A673 (cell line): ENCODE measurements at regions of chr18 and their contacts with region 1.

Region 1: GRCh38 chr18:23131693-23132319 is 3.5 kb upstream of the CABLES1 start:
- DNase-seq: peak; percentile 84
- H3K4me3 ChIP-seq: no peak overlapping the region
- H3K27ac ChIP-seq: no peak overlapping the region
- H3K4me1 ChIP-seq: peaks cover 12% of the 10 kb centered on the region
- H3K27me3 ChIP-seq: no peaks in the 10 kb centered on the region
- CTCF ChIP-seq: peak; percentile 81

Region 2: DNA sequence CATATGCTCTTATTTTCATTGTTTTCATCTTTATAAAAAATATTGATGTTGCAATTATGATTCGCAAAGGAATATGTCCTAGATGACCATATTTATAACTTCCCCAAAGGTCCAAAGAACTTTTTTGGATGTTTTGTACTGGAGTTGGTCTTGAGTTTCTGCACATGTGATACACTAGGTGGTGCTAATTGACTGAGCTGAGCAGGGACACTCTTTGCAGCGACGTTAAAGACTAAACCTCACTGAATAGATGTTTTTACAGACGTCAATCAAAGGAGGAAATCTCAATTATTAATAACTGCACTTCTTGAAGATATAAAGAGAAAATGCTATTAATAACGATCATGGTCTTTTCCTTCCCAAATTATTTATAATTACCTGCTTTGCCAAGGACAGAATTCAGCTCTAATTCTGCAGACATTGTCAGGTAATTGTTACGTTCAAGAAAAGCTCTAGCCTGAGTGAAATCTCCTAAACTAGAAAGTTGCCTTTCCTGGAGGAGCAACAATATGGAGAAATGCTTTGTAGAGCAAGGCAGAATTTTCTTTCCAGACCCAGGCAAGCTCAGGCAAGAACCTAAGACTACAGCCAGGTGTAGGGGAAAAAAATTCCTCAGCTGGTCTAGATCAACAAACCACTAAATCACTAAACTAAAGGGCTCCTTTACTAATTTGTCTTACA is 318.0 kb before region 1 on chr18:
- CTCF ChIA-PET with region 1: interaction called, 4 read pairs
- POLR2A ChIA-PET with region 1: no interaction called
- intact Hi-C with region 1: loop called (anchors 10 kb)
- DNase-seq: peak; percentile 73
- H3K4me3 ChIP-seq: no peak overlapping the region
- H3K27ac ChIP-seq: no peak overlapping the region
- H3K4me1 ChIP-seq: peaks cover 5% of the 10 kb centered on the region
- H3K27me3 ChIP-seq: no peaks in the 10 kb centered on the region
- CTCF ChIP-seq: peak; percentile 85

Region 3: GRCh38 chr18:23032030-23032582 is 99.7 kb before region 1 on chr18:
- CTCF ChIA-PET with region 1: no interaction called
- POLR2A ChIA-PET with region 1: no interaction called
- intact Hi-C with region 1: loop called (anchors 5 kb)
- DNase-seq: peak; percentile 12
- H3K4me3 ChIP-seq: no peak overlapping the region
- H3K27ac ChIP-seq: no peak overlapping the region
- H3K4me1 ChIP-seq: peaks cover 3% of the 10 kb centered on the region
- H3K27me3 ChIP-seq: no peaks in the 10 kb centered on the region
- CTCF ChIP-seq: no peak

Region 4: GRCh38 chr18:23099621-23100020 is 32.2 kb before region 1 on chr18:
- CTCF ChIA-PET with region 1: no interaction called
- POLR2A ChIA-PET with region 1: no interaction called
- intact Hi-C with region 1: no loop called
- DNase-seq: no peak
- H3K4me3 ChIP-seq: no peak overlapping the region
- H3K27ac ChIP-seq: no peak overlapping the region
- H3K4me1 ChIP-seq: peaks cover 9% of the 10 kb centered on the region
- H3K27me3 ChIP-seq: no peaks in the 10 kb centered on the region
- CTCF ChIP-seq: no peak

Region 5: GRCh38 chr18:23194155-23194996 is 62.6 kb after region 1 on chr18:
- CTCF ChIA-PET with region 1: no interaction called
- POLR2A ChIA-PET with region 1: no interaction called
- intact Hi-C with region 1: loop called (anchors 5 kb)
- DNase-seq: peak; percentile 51
- H3K4me3 ChIP-seq: no peak overlapping the region
- H3K27ac ChIP-seq: no peak overlapping the region
- H3K4me1 ChIP-seq: peaks cover 39% of the 10 kb centered on the region
- H3K27me3 ChIP-seq: no peaks in the 10 kb centered on the region
- CTCF ChIP-seq: no peak

Region 6: DNA sequence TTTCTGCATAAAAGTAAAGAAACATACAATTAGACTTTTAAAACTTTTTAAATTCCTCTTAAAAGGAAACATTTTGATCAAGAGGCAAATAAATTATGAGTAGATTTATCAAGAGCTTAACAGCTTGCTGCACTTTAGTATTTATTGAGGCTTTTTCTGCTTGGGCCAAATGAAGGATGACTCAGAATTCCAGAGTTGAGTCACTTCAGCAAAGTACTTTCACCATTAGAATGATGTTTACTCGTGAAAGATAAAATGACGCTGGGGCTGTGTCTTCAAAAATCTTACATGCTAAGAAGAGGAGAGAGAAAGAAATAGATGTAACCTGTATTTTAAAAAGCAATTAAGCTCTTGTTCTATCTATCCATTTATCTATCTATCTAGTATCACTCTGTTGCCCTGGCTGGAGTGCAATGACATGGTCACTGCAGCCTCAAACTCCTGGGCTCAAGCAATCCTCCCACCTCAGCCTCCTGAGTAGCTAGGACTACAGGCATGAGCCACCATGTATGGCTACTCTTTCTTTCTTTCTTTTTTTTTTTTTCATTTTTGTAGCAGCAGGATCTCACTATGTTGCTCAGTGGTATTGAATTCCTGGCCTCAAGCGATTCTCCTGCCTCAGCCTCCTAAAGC is 246.0 kb after region 1 on chr18:
- CTCF ChIA-PET with region 1: interaction called, 18 read pairs
- POLR2A ChIA-PET with region 1: no interaction called
- intact Hi-C with region 1: loop called (anchors 1 kb)
- DNase-seq: peak; percentile 48
- H3K4me3 ChIP-seq: no peak overlapping the region
- H3K27ac ChIP-seq: no peak overlapping the region
- H3K4me1 ChIP-seq: peaks cover 7% of the 10 kb centered on the region
- H3K27me3 ChIP-seq: no peaks in the 10 kb centered on the region
- CTCF ChIP-seq: no peak

Region 7: DNA sequence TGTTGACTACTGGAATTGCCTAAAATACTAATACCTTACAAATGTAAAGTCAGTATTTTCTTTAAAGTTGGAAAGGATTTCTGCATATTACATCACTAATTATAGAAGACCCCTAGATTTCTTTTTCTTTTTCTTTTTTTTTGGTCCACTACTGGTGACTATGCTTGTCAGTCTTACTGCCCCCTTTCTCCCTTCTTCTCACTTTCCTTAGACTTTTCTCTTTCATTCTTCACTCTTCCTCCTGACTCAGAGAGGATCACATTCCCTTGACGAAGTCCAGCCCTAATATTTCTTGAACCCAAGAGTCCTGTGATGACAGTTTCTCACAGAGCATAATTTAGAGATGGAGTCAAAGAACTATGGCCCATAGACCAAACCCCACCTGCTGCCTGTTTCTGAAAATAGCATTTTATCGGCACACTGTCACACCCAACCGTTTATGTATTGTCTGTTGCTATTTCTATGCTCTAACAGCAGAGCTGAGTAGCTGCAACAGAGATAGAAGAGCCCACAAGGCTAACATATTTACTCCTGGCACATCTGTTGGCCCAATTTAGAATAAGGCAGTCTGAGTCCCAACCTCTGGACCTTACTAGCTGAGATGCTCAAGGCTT is 280.7 kb after region 1 on chr18:
- CTCF ChIA-PET with region 1: interaction called, 21 read pairs
- POLR2A ChIA-PET with region 1: no interaction called
- intact Hi-C with region 1: loop called (anchors 1 kb)
- DNase-seq: no peak
- H3K4me3 ChIP-seq: no peak overlapping the region
- H3K27ac ChIP-seq: no peak overlapping the region
- H3K4me1 ChIP-seq: no peaks in the 10 kb centered on the region
- H3K27me3 ChIP-seq: no peaks in the 10 kb centered on the region
- CTCF ChIP-seq: no peak